ENCODE measurements at regions of chr16 and their contacts with region 1.

Region 1: GRCh38 chr16:23398987-23399805 is 53.8 kb downstream of the COG7 start:
- DNase-seq: no peak
- H3K4me3 ChIP-seq: no peak overlapping the region
- H3K27ac ChIP-seq: no peak overlapping the region
- H3K4me1 ChIP-seq: no peaks in the 10 kb centered on the region
- H3K27me3 ChIP-seq: no peaks in the 10 kb centered on the region
- CTCF ChIP-seq: no peak

Region 2: DNA sequence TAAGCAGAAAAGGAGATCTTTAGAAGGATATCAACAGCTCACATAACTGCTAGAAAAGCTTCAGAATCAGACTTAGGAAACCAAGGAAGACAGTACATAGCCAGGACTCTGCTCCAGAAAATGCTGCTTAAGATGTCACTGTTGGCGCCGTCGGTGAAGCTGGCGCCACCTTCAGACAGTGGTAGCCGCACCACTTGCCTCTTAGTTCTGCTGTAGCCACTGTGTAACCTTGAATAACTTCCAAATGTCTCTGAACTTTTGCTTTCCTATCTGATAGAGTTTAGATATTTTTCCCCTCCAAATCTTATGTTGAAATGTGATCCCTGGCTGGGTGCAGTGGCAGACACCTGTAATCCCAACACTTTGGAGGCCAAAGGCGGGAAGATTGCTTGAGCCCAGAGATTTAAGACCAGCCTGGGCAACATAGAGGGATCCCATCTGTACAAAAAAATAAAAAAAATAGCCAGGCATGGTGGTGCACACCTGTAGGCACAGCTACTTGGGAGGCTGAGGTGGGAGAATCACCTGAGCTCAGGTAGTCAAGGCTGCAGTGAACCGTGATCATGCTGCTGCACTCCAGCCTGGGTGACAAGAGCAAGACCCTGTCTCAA is 243.7 kb before region 1 on chr16:
- dilution Hi-C with region 1: loop called (anchors 25 kb)
- DNase-seq: no peak
- H3K4me3 ChIP-seq: no peak overlapping the region
- H3K27ac ChIP-seq: no peak overlapping the region
- H3K4me1 ChIP-seq: peaks cover 6% of the 10 kb centered on the region
- H3K27me3 ChIP-seq: no peaks in the 10 kb centered on the region
- CTCF ChIP-seq: peak in 1 of 3 experiments; percentile 65